Ascending aorta (tissue), 2 donors: ENCODE measurements at regions of chr22 and their contacts with region 1.

Region 1: GRCh38 chr22:32796865-32797573 is 4.5 kb upstream of the TIMP3 start:
- DNase-seq: peak in 1 of 2 donors; percentile 81
- H3K4me3 ChIP-seq: no peak overlapping the region
- H3K27ac ChIP-seq: no peak overlapping the region
- H3K4me1 ChIP-seq: peaks cover 0 to 3% of the 10 kb centered on the region in 2 donors
- H3K27me3 ChIP-seq: no peaks in the 10 kb centered on the region
- CTCF ChIP-seq: peak; percentile 78 to 89 (median 85)

Region 2: DNA sequence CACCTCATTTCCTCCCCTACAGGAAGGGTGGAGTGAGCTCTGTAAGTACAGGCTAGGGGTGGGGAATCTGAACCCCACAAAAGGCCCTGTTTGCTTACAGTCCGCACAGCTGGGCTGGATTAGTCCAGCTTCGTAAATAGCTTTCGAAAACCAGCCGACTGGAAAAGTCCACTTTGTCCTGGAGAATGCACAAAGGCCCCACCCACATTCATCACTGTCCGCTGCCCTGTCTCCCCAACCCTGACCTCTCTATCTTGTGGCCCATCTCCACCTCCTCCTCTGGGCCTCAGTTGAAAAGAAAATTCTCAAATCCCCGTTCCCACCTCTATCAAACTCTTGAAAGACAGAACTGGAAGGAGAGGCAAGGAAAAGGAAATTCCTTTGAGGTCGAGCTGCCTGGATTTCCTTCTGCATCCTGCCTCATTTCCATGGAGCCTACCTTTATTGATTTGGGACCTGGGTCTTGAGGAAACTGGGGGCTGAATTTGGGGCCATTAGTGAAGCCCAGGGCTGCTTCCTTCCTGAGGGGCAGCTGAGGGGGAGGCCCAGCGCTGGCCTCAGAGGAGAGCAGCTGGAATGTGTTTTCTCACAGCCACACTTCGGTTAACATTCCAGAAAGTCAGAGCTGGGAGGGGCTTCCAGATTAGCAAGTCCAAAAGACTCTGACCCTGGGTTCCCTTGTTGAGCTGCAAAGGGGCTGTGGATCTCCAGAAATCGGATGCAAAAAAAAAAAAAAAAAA is 174.8 kb before region 1 on chr22:
- intact Hi-C with region 1: loop called (anchors 5 kb)
- DNase-seq: no peak
- H3K4me3 ChIP-seq: peak overlapping the region in 1 of 2 donors; percentile 17
- H3K27ac ChIP-seq: peak overlapping the region; percentile 69 to 75
- H3K4me1 ChIP-seq: peaks cover 6 to 44% of the 10 kb centered on the region in 2 donors
- H3K27me3 ChIP-seq: no peaks in the 10 kb centered on the region
- CTCF ChIP-seq: no peak

Region 3: DNA sequence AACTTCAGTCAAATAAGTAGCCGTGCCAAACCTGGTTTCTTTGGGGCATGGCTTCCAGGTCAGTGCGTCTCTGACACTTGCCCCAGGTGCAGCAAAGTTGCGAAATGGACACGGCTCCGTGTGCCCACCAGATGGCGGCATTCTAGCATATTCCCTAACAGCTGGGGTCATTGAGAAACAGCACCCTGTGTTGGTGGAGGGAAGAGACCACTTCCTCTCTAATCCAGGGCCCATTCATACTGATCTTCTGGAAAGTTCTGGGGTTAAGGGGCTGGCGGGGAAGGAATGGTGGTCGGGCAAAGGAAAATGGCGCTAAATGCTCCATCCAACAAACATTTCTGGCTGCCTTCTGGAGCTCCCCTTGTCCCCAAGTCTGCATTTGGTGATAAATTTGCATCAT is 136.7 kb before region 1 on chr22:
- intact Hi-C with region 1: loop called (anchors 2 kb)
- DNase-seq: peak in 1 of 2 donors; percentile 83
- H3K4me3 ChIP-seq: no peak overlapping the region
- H3K27ac ChIP-seq: no peak overlapping the region
- H3K4me1 ChIP-seq: no peaks in the 10 kb centered on the region
- H3K27me3 ChIP-seq: no peaks in the 10 kb centered on the region
- CTCF ChIP-seq: peak; percentile 67 to 81 (median 71)

Region 4: GRCh38 chr22:32823024-32823730 is 26.2 kb after region 1 on chr22:
- intact Hi-C with region 1: no loop called
- DNase-seq: no peak
- H3K4me3 ChIP-seq: no peak overlapping the region
- H3K27ac ChIP-seq: no peak overlapping the region
- H3K4me1 ChIP-seq: peaks cover 0 to 7% of the 10 kb centered on the region in 2 donors
- H3K27me3 ChIP-seq: no peaks in the 10 kb centered on the region
- CTCF ChIP-seq: peak in 2 of 3 experiments; percentile 11 to 21

Region 5: DNA sequence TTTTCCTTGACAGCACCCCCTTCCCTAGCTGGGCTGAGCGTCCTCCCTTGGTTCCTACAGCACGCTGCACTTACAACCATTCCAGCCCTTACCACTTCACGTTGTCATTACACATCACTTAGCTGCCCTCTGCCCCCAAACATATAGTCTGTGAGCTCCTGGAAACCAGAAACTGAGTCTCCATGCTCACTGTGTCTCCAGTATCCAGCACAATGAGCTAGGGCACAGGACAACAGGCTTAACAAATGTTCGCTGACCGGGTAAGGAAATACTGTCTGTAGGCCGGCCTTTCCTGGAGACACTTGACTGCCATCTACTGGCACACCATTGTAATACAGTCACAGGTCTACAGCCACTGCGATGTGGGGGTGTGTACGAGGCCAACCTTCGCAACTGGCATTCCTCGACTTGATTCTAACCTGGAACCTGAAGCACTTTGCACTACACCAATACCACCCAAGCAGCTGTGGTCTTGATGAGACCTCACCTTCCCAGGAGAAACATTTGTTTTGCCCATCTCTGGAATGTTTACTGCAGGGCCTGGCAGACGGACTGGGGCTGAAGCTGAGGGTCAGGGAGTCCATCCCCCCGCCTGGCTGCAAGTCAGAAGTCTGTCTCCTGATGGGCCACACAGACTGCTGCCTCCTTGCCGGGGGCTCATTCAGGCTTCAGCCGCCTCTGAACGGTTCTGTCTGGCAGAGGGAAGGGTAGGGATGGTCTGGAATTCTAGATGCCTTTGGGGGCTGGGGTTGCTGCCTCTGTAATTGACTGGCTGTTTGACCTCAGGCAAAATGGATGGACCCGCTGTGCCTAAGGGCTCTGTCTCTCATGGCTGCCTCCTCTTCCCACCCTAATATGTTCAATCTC is 189.1 kb after region 1 on chr22:
- intact Hi-C with region 1: loop called (anchors 2 kb)
- DNase-seq: peak in 1 of 2 donors; percentile 85
- H3K4me3 ChIP-seq: no peak overlapping the region
- H3K27ac ChIP-seq: no peak overlapping the region
- H3K4me1 ChIP-seq: no peaks in the 10 kb centered on the region
- H3K27me3 ChIP-seq: no peaks in the 10 kb centered on the region
- CTCF ChIP-seq: peak; percentile 70 to 85 (median 82)